ENCODE measurements at regions of chr22 and their contacts with region 1.

Region 1: DNA sequence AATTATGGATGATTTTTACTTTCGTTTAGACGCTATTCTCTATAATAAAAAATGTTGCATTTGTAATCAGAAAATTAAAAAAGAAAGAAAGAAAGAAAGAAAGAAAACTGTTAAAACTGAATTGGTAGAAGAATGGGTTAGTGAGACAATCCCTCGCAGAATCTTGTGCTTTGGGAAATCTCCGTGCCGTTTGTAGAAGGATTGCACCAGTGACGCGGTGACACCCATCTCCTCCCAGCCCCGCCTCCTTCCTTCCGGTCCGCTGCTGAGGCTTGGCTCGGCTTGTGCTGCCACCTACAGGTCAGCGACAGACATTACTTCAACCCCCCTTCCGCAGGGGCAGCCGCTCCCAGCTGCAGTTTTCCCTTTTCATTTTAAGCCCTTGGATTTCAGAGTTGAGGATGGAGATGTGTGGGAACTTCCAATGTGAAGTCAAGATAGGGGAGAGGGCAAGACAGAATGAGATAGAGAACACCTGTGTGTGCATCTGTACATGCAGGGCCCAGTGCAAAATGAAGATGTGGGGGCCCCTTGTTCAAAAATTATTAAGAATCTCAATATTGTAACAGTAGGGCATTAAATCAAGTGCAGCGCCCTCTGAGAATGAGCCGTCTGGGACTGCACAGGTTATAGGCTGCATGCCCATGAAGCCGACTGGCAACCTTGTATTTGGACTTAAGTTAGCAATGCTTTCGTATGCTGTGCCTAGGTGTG is 41.1 kb downstream of the TST start:
- DNase-seq: peak; percentile 90 to 93 (median 92)
- ATAC-seq: peak; percentile 99 to 100 (median 100)
- H3K4me3 ChIP-seq: peak overlapping the region; percentile 17 to 44 (median 27)
- H3K27ac ChIP-seq: peak overlapping the region in 1 of 3 donors; percentile 16
- H3K4me1 ChIP-seq: peaks cover 0 to 6% (median 0%) of the 10 kb centered on the region in 4 donors
- H3K27me3 ChIP-seq: no peaks in the 10 kb centered on the region
- CTCF ChIP-seq: peak; percentile 92 to 97 (median 96)
- POLR2A ChIP-seq: no peak

Region 2: GRCh38 chr22:36781656-36782627 is 196.2 kb before region 1 on chr22:
- intact Hi-C with region 1: loop called in 1 of 2 experiments (anchors 10 kb)
- DNase-seq: peak; percentile 75 to 79 (median 79)
- ATAC-seq: peak; percentile 90 to 98 (median 96)
- H3K4me3 ChIP-seq: no peak overlapping the region
- H3K27ac ChIP-seq: no peak overlapping the region
- H3K4me1 ChIP-seq: peaks cover 0 to 1% (median 0%) of the 10 kb centered on the region in 4 donors
- H3K27me3 ChIP-seq: no peaks in the 10 kb centered on the region
- CTCF ChIP-seq: peak; percentile 86 to 95 (median 91)
- POLR2A ChIP-seq: no peak

Region 3: DNA sequence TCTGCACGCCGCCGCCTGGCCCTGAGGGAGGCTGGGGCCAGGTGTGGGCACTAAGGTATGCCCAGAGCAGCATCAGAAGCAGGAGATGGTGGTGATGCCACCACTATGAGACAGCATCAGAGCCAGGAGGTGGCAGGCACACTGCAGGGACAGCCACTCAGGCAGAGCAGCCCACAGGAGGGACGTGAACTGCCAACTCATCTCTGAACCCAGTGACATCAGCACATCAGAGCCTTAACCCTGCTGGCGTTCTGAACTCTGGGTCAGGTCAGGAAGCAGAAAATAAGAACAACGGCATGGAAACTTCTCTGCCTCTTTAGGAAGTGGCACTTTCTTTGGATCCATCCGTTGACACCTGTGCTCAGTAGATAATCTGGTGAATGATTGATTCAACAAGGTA is 187.5 kb before region 1 on chr22:
- intact Hi-C with region 1: loop called (anchors 10 kb)
- DNase-seq: no peak
- ATAC-seq: peak in 1 of 4 donors; percentile 25
- H3K4me3 ChIP-seq: no peak overlapping the region
- H3K27ac ChIP-seq: no peak overlapping the region
- H3K4me1 ChIP-seq: no peaks in the 10 kb centered on the region
- H3K27me3 ChIP-seq: no peaks in the 10 kb centered on the region
- CTCF ChIP-seq: no peak
- POLR2A ChIP-seq: no peak

Region 4: DNA sequence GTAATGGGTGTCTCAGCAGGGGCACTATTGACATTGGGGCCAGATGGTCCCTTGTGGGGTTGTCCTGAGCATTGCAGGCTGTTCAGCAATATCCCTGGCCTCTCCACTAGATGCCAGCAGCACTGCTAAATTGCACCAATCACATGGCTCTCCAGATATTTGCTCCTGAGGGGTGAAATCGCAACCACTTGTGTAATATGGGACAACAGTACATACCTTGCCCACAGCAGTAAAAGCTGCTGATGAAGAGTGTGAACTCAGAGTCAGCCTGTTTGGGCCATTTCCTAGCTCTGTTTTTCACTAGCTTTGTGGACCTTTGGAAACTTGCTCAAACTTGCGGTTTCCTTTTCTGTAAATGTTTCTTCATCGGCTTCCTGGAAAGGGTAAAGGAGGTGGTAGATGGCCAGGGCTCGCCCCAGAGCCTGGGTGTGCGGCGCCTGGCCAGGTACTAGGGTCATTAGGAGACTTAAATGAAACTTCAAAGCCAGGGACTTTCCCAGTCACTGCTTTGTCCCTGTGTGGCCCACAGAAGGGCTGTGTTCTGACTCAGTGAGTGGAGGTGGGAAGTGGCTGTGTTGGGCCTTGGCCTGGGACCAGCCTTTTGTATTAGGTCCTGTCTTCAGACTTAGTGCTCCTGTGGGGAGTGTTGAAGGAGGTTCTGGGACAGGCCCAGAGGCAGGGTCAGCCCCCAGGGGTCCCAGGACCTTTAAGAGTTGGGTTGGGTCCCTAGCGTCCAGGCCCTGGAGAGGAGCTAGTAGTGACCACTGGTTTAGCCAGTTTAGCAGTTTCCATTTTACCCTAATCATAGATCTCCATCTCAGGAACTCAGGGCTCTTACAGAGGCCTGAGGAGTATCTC is 104.2 kb before region 1 on chr22:
- intact Hi-C with region 1: loop called in 1 of 2 experiments (anchors 10 kb)
- DNase-seq: peak in 2 of 3 donors; percentile 56 to 69
- ATAC-seq: peak; percentile 94 to 98 (median 96)
- H3K4me3 ChIP-seq: no peak overlapping the region
- H3K27ac ChIP-seq: peak overlapping the region; percentile 23 to 56 (median 24)
- H3K4me1 ChIP-seq: peaks cover 0 to 12% (median 5%) of the 10 kb centered on the region in 4 donors
- H3K27me3 ChIP-seq: no peaks in the 10 kb centered on the region
- CTCF ChIP-seq: peak; percentile 56 to 75 (median 68)
- POLR2A ChIP-seq: no peak

Region 5: DNA sequence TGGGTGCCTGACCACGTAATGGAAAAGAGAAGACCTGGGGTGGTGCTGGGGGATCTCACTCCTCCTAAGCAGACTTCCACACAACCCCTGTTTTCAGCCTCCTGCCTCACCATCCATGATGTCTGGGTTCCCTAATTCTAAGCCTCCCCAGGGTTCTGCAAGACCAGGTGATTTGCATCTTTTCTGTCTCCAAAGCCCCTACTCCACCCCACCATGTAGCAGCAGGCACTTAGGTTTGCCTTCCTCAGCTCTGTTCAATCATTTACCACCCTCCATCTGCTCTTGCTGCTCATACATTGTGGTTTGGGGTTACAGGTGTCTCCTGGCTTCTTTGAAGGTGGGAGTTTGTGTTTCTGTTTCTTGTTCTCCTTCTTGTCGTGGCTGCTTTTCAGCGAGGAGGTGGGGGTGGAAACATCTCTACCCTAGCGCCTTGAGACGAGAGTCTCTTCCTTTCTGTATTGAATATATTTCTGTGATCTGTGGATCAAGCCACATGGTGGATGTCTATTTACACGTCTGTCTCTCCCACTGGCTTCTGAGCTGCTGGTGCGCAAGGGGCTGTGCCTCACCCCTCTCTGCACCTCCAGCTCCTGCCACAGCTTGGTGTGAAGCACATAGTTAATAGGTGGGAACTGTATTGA is 240.8 kb after region 1 on chr22:
- intact Hi-C with region 1: no loop called
- DNase-seq: no peak
- ATAC-seq: peak in 1 of 4 donors; percentile 26
- H3K4me3 ChIP-seq: no peak overlapping the region
- H3K27ac ChIP-seq: no peak overlapping the region
- H3K4me1 ChIP-seq: no peaks in the 10 kb centered on the region
- H3K27me3 ChIP-seq: no peaks in the 10 kb centered on the region
- CTCF ChIP-seq: no peak
- POLR2A ChIP-seq: no peak